Cardiac septum (tissue), 1 donor: ENCODE measurements at regions of chr2 and their contacts with region 1.

Region 1: GRCh38 chr2:150472511-150472899 is 15.0 kb downstream of the RND3 start:
- DNase-seq: peak; percentile 80

Region 2: DNA sequence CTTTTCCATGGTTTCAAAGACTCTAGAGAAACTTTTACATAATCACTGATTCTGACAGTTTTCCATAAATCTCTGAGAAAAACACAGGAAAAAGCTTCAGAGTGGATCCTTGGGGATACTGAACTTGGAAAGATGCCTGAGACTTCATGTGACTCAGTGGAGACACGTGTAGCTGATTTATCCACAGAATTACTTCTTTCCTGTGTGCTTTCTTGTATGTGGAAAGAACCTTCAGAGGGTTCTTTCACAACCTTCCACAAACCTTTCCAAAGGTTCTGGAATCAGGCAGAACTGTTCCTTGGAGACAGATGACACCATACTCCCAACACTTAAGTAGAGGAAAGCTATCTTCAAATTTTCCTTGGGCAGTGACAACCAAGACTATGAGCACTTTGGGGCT is 192.3 kb before region 1 on chr2:
- intact Hi-C with region 1: loop called (anchors 5 kb)
- DNase-seq: no peak

Region 3: GRCh38 chr2:150548527-150548926 is 76.0 kb after region 1 on chr2:
- intact Hi-C with region 1: no loop called
- DNase-seq: no peak